ENCODE measurements at regions of chr6 and their contacts with region 1.

Region 1: GRCh38 chr6:138115877-138116660 is 8.8 kb upstream of the PERP start:
- DNase-seq: peak; percentile 20 to 33
- ATAC-seq: peak; percentile 89 to 92
- H3K4me3 ChIP-seq: no peak overlapping the region
- H3K27ac ChIP-seq: no peak overlapping the region
- H3K4me1 ChIP-seq: no peaks in the 10 kb centered on the region
- H3K27me3 ChIP-seq: no peaks in the 10 kb centered on the region
- CTCF ChIP-seq: peak; percentile 60 to 80 (median 75)
- POLR2A ChIP-seq: no peak

Region 2: GRCh38 chr6:137707590-137708360 is 408.3 kb before region 1 on chr6:
- in situ Hi-C with region 1: loop called in 2 of 4 experiments (anchors 10 to 25 kb)
- intact Hi-C with region 1: no loop called
- DNase-seq: peak; percentile 45 to 69
- ATAC-seq: peak; percentile 81 to 89
- H3K4me3 ChIP-seq: peak overlapping the region in 1 of 4 donors; percentile 2
- H3K27ac ChIP-seq: no peak overlapping the region
- H3K4me1 ChIP-seq: peaks cover 9 to 11% of the 10 kb centered on the region in 2 donors
- H3K27me3 ChIP-seq: no peaks in the 10 kb centered on the region
- CTCF ChIP-seq: peak; percentile 57 to 79 (median 71)
- POLR2A ChIP-seq: no peak

Region 3: DNA sequence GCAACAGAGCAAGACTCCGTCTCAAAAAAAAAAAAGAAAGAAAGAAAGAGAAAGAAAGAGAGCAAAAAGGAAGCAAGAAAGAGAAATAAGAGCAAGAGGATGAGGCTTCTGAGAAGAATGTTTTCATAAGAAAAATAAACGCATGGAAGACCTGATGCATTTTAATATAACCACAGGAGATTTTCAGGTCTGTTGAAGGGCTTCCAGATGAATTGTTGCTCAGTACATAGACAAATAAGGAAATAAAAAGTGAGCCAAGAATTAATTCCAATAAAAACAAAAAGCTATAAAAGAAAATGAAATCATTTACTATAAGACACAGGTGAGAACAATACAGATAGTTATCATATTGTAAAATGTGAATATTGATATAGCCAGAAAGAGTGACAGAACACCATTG is 52.3 kb before region 1 on chr6:
- in situ Hi-C with region 1: no loop called
- intact Hi-C with region 1: no loop called
- DNase-seq: no peak
- ATAC-seq: no peak
- H3K4me3 ChIP-seq: no peak overlapping the region
- H3K27ac ChIP-seq: no peak overlapping the region
- H3K4me1 ChIP-seq: no peaks in the 10 kb centered on the region
- H3K27me3 ChIP-seq: no peaks in the 10 kb centered on the region
- CTCF ChIP-seq: no peak
- POLR2A ChIP-seq: no peak

Region 4: DNA sequence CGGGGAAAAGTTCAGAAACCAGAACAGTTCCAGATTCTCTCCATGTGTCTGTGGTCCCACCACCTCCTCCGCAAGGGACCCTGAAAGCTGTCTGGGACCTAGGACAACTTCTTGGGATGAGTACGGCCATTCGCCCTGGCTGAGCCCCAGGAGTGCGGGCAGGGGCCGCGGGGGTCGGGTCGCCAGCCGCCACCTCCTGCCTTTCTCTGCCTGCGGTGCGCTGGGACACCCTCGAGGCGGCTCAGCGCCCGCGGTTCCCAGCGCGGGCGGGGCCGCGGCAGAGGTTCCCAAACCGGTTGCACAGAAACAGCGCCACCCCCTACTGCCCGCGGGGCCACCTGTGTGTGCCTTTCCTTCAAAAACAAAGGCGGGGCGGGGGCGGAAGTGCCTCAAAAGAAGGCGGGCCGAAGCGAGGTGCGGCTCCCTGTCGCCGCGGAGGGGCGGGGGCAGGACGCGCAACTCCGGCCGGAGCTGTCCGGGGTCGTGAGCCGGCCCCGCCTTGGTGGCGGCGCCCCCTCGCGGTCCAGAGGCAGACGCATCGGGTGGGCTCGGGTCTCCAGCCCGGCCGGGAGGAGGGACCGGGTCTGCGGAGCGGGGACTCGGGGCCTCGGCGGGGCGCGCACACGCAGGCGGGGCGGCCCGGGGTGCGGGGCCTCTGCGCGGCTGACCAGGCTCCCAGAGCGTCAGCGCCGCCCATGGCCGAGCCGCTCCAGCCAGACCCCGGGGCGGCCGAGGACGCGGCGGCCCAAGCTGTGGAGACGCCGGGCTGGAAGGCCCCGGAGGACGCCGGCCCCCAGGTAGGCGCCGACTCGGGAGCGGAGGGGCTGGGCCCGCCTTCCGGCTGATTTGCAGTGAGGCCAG is 288.0 kb after region 1 on chr6 and contains the start of gene HEBP2:
- in situ Hi-C with region 1: loop called in 3 of 4 experiments (anchors 10 kb)
- intact Hi-C with region 1: loop called (anchors 2 kb)
- DNase-seq: peak; percentile 95 to 96
- ATAC-seq: peak; percentile 89 to 93
- H3K4me3 ChIP-seq: peak within 1 kb of the TSS; percentile 65 to 92 (median 84)
- H3K27ac ChIP-seq: peak within 1 kb of the TSS; percentile 92 to 97 (median 94)
- H3K4me1 ChIP-seq: peaks cover 8 to 9% of the 10 kb centered on the region in 2 donors
- H3K27me3 ChIP-seq: no peaks in the 10 kb centered on the region
- CTCF ChIP-seq: peak in 4 of 5 experiments; percentile 39 to 79 (median 78)
- POLR2A ChIP-seq: peak; percentile 81 to 91
- total RNA-seq, gene HEBP2: 60.3 to 81.5 (median 74.8) TPM

Region 5: GRCh38 chr6:138517635-138518034 is 401.6 kb after region 1 on chr6:
- in situ Hi-C with region 1: loop called in 1 of 4 experiments (anchors 10 kb)
- intact Hi-C with region 1: no loop called
- DNase-seq: no peak
- ATAC-seq: no peak
- H3K4me3 ChIP-seq: no peak overlapping the region
- H3K27ac ChIP-seq: no peak overlapping the region
- H3K4me1 ChIP-seq: no peaks in the 10 kb centered on the region
- H3K27me3 ChIP-seq: no peaks in the 10 kb centered on the region
- CTCF ChIP-seq: peak in 3 of 5 experiments; percentile 30 to 48 (median 41)
- POLR2A ChIP-seq: no peak

Region 6: DNA sequence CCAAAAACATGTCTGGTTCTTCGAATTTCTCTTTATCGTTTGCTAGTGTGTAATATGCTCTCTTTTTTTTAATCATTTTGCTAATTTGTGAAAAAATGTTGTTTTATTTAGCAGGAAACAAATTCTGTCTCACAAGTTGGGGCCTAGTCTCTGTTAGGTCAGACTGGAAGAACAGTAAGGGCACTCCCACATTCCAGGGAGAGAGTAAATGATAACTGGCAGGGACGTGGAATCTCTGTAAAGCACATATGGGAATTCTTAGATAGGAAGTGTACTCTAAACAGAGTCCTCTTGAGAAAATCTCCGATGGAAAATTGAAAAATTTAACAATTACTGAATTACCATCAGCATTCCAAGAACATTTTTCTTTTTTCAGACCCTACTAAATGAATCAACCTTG is 641.1 kb after region 1 on chr6:
- in situ Hi-C with region 1: loop called in 3 of 4 experiments (anchors 5 to 25 kb)
- intact Hi-C with region 1: no loop called
- DNase-seq: no peak
- ATAC-seq: no peak
- H3K4me3 ChIP-seq: no peak overlapping the region
- H3K27ac ChIP-seq: no peak overlapping the region
- H3K4me1 ChIP-seq: no peaks in the 10 kb centered on the region
- H3K27me3 ChIP-seq: no peaks in the 10 kb centered on the region
- CTCF ChIP-seq: no peak
- POLR2A ChIP-seq: no peak

Region 7: DNA sequence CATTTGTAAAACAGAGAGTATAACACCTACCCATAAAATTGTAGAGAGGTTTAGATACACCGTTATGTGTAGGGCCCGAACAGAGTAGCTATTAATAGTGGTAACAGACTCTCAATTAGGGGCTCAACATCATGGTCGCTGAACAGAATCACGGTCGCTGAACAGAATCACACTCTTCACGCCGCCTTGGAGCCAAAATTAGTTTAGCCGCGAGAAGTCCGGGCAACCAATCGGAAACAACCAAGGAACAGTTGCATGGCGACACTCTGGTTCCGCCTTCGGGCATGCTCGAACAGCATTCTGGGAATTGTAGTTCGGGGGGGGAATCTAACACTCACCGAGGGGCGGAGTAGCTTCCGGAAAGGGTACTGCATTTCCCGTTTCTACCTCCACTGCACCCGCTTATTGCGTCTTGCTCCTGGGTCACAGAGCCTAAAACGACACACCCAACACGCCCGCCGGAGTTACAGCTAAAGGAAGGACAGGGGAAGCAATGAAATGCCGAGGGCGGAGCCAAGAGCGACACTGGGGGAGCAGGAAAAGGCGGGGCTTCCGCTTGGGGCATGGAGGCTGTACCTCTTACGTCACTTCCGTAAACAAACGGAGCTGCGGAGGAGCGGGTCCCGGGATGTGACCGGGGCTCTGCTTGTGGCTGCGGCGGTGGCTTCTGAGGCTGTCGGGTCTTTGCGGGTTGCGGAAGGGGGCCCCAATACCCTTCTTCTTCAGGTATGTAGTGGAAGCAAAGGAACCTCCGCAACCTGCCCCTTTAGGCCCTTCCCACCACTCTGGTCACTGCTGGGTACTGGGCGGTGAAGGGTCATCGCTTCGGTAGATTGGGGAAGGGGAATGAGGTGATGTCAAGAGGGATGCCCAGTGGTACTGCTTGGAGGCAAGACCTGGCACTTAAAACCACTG is 657.4 kb after region 1 on chr6 and contains the start of gene CCDC28A:
- in situ Hi-C with region 1: loop called in 3 of 4 experiments (anchors 10 to 25 kb)
- intact Hi-C with region 1: loop called (anchors 5 kb)
- DNase-seq: peak; percentile 90 to 94
- ATAC-seq: peak; percentile 99
- H3K4me3 ChIP-seq: peak within 1 kb of the TSS; percentile 68 to 99 (median 80)
- H3K27ac ChIP-seq: peak within 1 kb of the TSS; percentile 93 to 99 (median 96)
- H3K4me1 ChIP-seq: peaks cover 19 to 24% of the 10 kb centered on the region in 2 donors
- H3K27me3 ChIP-seq: no peaks in the 10 kb centered on the region
- CTCF ChIP-seq: peak in 1 of 5 experiments; percentile 19
- POLR2A ChIP-seq: peak; percentile 42 to 67
- total RNA-seq, gene CCDC28A: 4.6 to 8.4 (median 5.6) TPM